Activated CD8-positive, alpha-beta T cell treated with anti-CD3 and anti-CD28 coated beads for 36 hours (primary cell): ENCODE measurements at regions of chr15 and their contacts with region 1.

Region 1: DNA sequence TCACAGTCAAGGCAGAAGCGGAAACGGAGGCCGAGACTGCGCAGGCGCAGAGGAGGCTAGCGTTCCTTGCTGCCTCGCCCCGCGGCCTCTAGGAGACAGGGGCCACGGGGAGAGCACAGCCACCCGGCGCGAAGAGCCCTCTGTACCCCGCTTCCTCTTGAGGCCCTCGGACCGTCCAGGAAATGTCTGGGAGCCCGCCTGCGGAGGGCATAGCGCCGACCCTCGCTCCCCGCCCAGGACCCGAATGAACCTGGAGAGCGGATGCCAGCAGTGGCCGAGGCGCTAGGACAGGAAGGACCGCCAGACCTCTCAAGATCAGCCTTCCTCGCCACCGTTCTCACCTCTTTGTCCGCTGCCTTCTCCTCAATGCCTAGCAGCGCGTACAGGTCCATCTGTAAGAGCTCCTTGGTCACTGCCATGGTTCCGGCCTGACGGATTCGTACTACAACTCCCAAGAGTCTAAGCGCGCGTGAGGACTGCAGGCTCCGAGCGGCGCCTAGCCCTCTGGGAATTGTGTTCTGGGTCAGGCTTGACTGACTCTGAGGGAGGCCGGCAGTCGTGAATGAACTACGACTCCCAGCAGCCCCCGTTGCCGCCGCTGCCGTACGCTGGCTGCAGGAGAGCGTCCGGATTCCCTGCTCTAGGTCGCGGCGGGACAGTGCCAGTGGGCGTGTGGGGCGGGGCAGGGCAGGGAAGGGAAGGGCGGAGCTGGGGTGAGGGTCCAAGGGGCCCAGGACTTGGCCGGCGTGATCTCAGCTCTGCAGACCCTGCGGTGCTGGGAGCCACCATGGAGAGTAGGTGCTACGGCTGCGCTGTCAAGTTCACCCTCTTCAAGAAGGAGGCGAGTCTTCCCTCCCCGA is at the starts of genes DNAJC17 and ZFYVE19:
- DNase-seq: peak; percentile 97
- ATAC-seq: peak; percentile 97
- H3K4me3 Mint-ChIP-seq: peak within 1 kb of the TSS; percentile 78
- H3K27ac Mint-ChIP-seq: peak within 1 kb of the TSS; percentile 99
- H3K4me1 Mint-ChIP-seq: peaks cover 20% of the 10 kb centered on the region
- H3K27me3 Mint-ChIP-seq: no peaks in the 10 kb centered on the region
- CTCF ChIP-seq: no peak
- total RNA-seq, gene DNAJC17: 35.8 to 35.9 TPM
- total RNA-seq, gene ZFYVE19: 20.1 to 22.7 TPM

Region 2: DNA sequence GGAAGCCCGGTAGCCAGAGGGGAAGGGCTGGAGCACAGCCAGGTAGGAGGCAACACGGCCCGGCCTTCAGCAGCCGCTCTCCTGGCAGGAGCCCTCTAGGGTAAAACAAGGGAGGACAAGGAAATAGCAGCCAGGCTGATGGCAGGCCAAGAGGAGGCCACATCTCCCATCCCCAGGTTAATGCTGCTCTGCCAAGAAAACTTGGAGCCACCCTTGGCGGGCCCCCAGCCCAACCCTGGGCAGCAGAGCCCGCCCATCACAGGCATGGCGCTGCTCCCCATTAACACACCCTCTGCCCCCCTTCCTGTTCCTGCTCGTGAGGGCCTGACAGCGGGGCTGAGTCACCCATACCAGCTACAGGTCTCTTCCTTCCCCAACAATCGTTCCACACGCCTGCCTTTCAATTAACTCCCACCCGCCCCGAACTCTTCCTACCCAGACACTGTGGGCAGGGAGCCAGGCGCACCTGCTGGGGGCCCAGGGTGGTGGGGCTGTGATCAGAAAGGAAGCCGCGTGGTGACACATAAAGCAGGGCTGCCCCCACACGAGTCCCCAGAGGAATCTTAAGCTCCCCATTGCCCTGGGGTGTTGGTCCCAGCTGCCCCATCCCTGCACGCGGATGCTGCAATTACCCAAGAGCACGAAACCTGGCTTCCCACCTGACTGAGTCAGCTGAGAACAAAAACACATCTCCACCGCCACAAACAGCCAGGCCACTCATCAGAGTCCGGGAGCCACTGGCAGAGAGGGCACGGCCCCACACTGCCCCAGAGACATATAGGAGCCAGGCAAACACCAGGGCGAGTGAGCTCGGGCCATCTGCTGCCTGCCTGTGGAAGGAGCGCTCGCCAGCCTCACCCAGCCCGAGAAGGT is 37.7 kb before region 1 on chr15 and contains the start of gene C15orf62:
- CTCF ChIA-PET with region 1: no interaction called
- POLR2A ChIA-PET with region 1: interaction called, 4 read pairs
- intact Hi-C with region 1: loop called (anchors 5 kb)
- DNase-seq: peak; percentile 88
- ATAC-seq: peak; percentile 72
- H3K4me3 Mint-ChIP-seq: peak within 1 kb of the TSS; percentile 59
- H3K27ac Mint-ChIP-seq: peak within 1 kb of the TSS; percentile 92
- H3K4me1 Mint-ChIP-seq: peaks cover 49% of the 10 kb centered on the region
- H3K27me3 Mint-ChIP-seq: no peaks in the 10 kb centered on the region
- CTCF ChIP-seq: no peak
- total RNA-seq, gene C15orf62: 0.61 to 0.63 TPM